ENCODE measurements at regions of chr12 and their contacts with region 1.

Region 1: GRCh38 chr12:131928711-131929580 is at the start of gene PUS1:
- DNase-seq: peak; percentile 88
- ATAC-seq: peak; percentile 82
- H3K4me3 Mint-ChIP-seq: peak within 1 kb of the TSS; percentile 94
- H3K27ac Mint-ChIP-seq: peak within 1 kb of the TSS; percentile 90
- H3K4me1 Mint-ChIP-seq: peaks cover 36% of the 10 kb centered on the region
- H3K27me3 Mint-ChIP-seq: no peaks in the 10 kb centered on the region
- CTCF ChIP-seq: no peak
- total RNA-seq, gene PUS1: 51.5 and 60.3 TPM in 2 replicates

Region 2: GRCh38 chr12:130871286-130872178 is 1057.4 kb before region 1 on chr12 and contains the start of gene RAN:
- CTCF ChIA-PET with region 1: no interaction called
- POLR2A ChIA-PET with region 1: no interaction called
- intact Hi-C with region 1: loop called (anchors 10 kb)
- DNase-seq: peak; percentile 89
- ATAC-seq: peak; percentile 79
- H3K4me3 Mint-ChIP-seq: peak within 1 kb of the TSS; percentile 92
- H3K27ac Mint-ChIP-seq: peak within 1 kb of the TSS; percentile 93
- H3K4me1 Mint-ChIP-seq: peaks cover 42% of the 10 kb centered on the region
- H3K27me3 Mint-ChIP-seq: no peaks in the 10 kb centered on the region
- CTCF ChIP-seq: no peak
- total RNA-seq, gene RAN: 748 and 757 TPM in 2 replicates

Region 3: DNA sequence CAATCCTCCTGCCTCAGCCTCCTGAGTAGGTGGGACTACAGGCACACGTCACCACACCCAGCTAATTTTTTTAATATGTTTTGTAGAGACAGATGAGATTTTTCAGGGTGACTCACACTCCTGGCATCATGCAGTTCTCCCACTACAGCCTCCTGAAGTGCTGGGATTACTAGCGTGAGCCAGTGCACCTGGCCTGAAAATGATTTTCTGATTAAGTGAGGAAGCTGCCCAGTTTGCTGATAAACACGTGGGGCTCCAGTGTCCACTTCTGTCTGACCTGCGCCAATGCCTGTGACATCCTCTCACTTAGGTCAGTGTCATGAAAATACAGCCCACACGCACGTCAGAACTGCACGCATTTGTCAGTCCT is 255.1 kb before region 1 on chr12:
- CTCF ChIA-PET with region 1: no interaction called
- POLR2A ChIA-PET with region 1: no interaction called
- intact Hi-C with region 1: no loop called
- DNase-seq: no peak
- ATAC-seq: no peak
- H3K4me3 Mint-ChIP-seq: no peak overlapping the region
- H3K27ac Mint-ChIP-seq: no peak overlapping the region
- H3K4me1 Mint-ChIP-seq: no peaks in the 10 kb centered on the region
- H3K27me3 Mint-ChIP-seq: peaks cover 12% of the 10 kb centered on the region
- CTCF ChIP-seq: no peak

Region 4: DNA sequence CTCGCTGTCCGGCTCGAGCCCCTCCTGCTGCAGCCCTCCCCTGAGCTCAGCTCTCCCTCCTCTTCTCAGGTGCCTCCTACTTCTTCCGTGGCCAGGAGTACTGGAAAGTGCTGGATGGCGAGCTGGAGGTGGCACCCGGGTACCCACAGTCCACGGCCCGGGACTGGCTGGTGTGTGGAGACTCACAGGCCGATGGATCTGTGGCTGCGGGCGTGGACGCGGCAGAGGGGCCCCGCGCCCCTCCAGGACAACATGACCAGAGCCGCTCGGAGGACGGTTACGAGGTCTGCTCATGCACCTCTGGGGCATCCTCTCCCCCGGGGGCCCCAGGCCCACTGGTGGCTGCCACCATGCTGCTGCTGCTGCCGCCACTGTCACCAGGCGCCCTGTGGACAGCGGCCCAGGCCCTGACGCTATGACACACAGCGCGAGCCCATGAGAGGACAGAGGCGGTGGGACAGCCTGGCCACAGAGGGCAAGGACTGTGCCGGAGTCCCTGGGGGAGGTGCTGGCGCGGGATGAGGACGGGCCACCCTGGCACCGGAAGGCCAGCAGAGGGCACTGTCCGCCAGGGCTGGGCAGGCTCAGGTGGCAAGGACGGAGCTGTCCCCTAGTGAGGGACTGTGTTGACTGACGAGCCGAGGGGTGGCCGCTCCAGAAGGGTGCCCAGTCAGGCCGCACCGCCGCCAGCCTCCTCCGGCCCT is 77.9 kb before region 1 on chr12:
- CTCF ChIA-PET with region 1: interaction called, 3 read pairs
- POLR2A ChIA-PET with region 1: no interaction called
- intact Hi-C with region 1: loop called (anchors 1 kb)
- DNase-seq: peak; percentile 42
- ATAC-seq: peak; percentile 59
- H3K4me3 Mint-ChIP-seq: no peak overlapping the region
- H3K27ac Mint-ChIP-seq: no peak overlapping the region
- H3K4me1 Mint-ChIP-seq: peaks cover 16% of the 10 kb centered on the region
- H3K27me3 Mint-ChIP-seq: no peaks in the 10 kb centered on the region
- CTCF ChIP-seq: no peak

Region 5: GRCh38 chr12:131949431-131950181 is 20.7 kb after region 1 on chr12 and contains the start of gene EP400:
- CTCF ChIA-PET with region 1: no interaction called
- POLR2A ChIA-PET with region 1: interaction called, 23 read pairs
- intact Hi-C with region 1: loop called (anchors 1 kb)
- DNase-seq: peak; percentile 92
- ATAC-seq: peak; percentile 97
- H3K4me3 Mint-ChIP-seq: peak within 1 kb of the TSS; percentile 93
- H3K27ac Mint-ChIP-seq: peak within 1 kb of the TSS; percentile 80
- H3K4me1 Mint-ChIP-seq: peaks cover 32% of the 10 kb centered on the region
- H3K27me3 Mint-ChIP-seq: no peaks in the 10 kb centered on the region
- CTCF ChIP-seq: no peak
- total RNA-seq, gene EP400: 57.8 and 65.6 TPM in 2 replicates

Region 6: DNA sequence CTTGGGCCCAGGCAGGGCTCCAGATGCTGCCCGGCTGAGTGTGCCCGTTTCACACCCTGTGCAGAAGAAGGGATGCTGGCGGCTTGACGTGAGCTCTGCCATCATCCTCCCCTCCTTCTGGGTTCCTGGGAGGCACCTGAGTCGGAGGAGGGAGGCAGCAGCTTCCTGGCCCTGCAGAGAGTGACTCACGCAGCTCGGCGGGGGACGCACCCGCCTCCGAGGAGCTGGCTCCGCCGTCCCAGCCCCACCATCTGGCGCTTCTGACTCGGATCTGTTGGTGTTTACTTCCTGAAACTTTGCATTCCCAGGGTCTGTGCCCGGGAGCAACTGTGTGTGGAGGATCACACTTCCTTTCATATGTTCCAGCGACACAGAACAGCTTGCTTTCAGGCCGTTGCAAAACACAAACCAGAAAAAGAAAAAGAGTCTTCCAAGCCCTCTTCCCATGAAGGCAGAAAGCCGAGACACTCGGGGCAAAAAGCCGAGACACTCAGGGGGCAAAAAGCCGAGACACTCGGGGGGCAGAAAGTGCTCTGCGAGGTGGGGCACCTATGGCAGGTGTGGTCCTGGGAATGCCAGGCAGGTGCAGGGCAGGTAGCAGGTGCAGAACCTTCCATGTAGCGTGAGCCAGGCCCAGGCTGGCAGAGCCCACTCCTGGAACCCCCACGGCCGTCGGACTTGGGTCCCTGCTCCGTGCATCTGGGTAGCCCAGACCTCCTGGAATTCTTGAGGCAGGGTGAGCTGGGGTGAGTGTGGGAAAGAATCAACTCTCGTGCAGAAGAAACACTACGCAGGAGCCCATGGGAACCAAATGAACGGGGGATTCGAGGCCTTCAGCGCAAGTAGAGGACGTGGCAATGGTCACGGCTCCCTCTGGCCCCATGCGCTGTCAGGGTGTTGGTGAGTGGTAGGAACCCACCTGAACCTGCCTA is 428.0 kb after region 1 on chr12:
- CTCF ChIA-PET with region 1: no interaction called
- POLR2A ChIA-PET with region 1: no interaction called
- intact Hi-C with region 1: no loop called
- DNase-seq: no peak
- ATAC-seq: no peak
- H3K4me3 Mint-ChIP-seq: no peak overlapping the region
- H3K27ac Mint-ChIP-seq: no peak overlapping the region
- H3K4me1 Mint-ChIP-seq: peaks cover 6% of the 10 kb centered on the region
- H3K27me3 Mint-ChIP-seq: no peaks in the 10 kb centered on the region
- CTCF ChIP-seq: no peak

Region 7: DNA sequence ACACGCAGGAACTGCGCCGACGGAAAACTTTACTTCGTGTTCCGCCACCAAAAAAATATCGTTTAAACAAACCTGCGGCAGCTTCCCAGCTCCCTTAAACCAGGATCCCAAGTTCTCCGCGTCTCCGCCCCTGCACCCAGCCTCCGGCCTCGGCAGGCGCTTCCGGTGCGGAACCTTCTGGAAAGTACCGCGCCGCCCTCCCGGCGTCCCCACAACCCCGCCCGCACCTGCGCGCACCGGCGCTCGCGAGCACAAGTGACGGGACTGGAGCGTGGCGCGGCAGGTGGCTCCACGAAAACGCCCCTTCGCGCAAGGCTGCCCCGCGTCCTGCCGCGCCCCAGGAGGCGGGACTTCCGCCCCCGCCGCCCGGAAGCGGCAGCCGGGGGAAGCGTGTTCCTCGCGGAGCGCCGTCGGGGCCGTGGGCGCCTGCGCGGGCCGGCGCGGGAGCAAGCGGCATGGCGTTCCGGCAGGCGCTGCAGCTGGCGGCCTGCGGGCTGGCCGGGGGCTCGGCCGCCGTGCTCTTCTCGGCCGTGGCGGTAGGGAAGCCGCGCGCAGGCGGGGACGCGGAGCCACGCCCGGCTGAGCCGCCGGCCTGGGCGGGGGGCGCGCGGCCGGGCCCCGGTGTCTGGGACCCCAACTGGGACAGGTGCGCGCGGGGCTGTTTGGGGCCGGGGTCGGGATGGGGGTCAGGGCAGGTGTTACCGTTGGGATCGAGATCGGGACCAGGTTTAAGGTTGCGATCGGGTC is 781.6 kb after region 1 on chr12 and contains the start of gene PGAM5:
- CTCF ChIA-PET with region 1: no interaction called
- POLR2A ChIA-PET with region 1: no interaction called
- intact Hi-C with region 1: loop called (anchors 5 kb)
- DNase-seq: peak; percentile 96
- ATAC-seq: peak; percentile 93
- H3K4me3 Mint-ChIP-seq: peak within 1 kb of the TSS; percentile 92
- H3K27ac Mint-ChIP-seq: peak within 1 kb of the TSS; percentile 95
- H3K4me1 Mint-ChIP-seq: peaks cover 33% of the 10 kb centered on the region
- H3K27me3 Mint-ChIP-seq: no peaks in the 10 kb centered on the region
- CTCF ChIP-seq: no peak
- total RNA-seq, gene PGAM5: 44.0 and 48.7 TPM in 2 replicates

Measured in activated B cell treated with CpG ODN at 0.5 μM for 24 hours (primary cell).